IMR-90 (cell line): ENCODE measurements at regions of chr4 and their contacts with region 1.

Region 1: GRCh38 chr4:52051619-52052474 is 743 bp downstream of the SPATA18 start:
- DNase-seq: peak; percentile 89
- ATAC-seq: peak; percentile 96
- H3K4me3 ChIP-seq: peak overlapping the region; percentile 57
- H3K27ac ChIP-seq: peak overlapping the region; percentile 88
- H3K4me1 ChIP-seq: no peaks in the 10 kb centered on the region
- H3K27me3 ChIP-seq: peaks cover 6% of the 10 kb centered on the region
- CTCF ChIP-seq: no peak
- POLR2A ChIP-seq: no peak
- RAD21 ChIP-seq: no peak

Region 2: GRCh38 chr4:51997647-51998046 is 54.2 kb before region 1 on chr4:
- CTCF ChIA-PET with region 1: no interaction called
- POLR2A ChIA-PET with region 1: no interaction called
- dilution Hi-C with region 1: no loop called
- in situ Hi-C with region 1: no loop called
- intact Hi-C with region 1: loop called (anchors 10 kb)
- DNase-seq: no peak
- ATAC-seq: no peak
- H3K4me3 ChIP-seq: no peak overlapping the region
- H3K27ac ChIP-seq: no peak overlapping the region
- H3K4me1 ChIP-seq: peaks cover 2% of the 10 kb centered on the region
- H3K27me3 ChIP-seq: peaks cover 2% of the 10 kb centered on the region; the same call in 1 of the 2 replicates
- CTCF ChIP-seq: no peak
- POLR2A ChIP-seq: no peak
- RAD21 ChIP-seq: no peak

Region 3: DNA sequence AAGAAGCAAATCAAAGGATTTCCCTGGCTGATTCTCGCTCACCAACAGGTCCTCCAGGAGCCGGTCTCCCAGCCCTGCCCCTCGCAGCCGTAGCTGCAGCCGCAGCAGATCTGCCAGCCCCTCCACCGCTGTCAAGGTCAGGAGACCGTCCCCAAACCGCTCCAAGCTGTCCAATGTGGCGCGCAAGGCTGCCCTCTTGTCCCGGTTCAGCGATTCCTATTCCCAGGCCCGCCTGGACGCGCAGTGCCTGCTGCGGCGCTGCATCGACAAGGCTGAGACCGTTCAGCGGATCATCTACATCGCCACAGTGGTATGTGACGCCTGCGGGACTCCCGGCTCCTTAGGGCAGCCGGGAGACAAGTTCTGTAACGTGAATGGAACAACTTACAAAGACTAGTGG is 24.9 kb after region 1 on chr4:
- CTCF ChIA-PET with region 1: interaction called, 3 read pairs
- POLR2A ChIA-PET with region 1: no interaction called
- dilution Hi-C with region 1: no loop called
- in situ Hi-C with region 1: no loop called
- intact Hi-C with region 1: loop called (anchors 2 kb)
- DNase-seq: no peak
- ATAC-seq: peak; percentile 89
- H3K4me3 ChIP-seq: no peak overlapping the region
- H3K27ac ChIP-seq: no peak overlapping the region
- H3K4me1 ChIP-seq: no peaks in the 10 kb centered on the region
- H3K27me3 ChIP-seq: peaks cover 7% of the 10 kb centered on the region; the same call in 1 of the 2 replicates
- CTCF ChIP-seq: no peak
- POLR2A ChIP-seq: no peak
- RAD21 ChIP-seq: no peak

Region 4: GRCh38 chr4:52091535-52092200 is 39.8 kb after region 1 on chr4:
- CTCF ChIA-PET with region 1: no interaction called
- POLR2A ChIA-PET with region 1: no interaction called
- dilution Hi-C with region 1: no loop called
- in situ Hi-C with region 1: no loop called
- intact Hi-C with region 1: loop called (anchors 5 kb)
- DNase-seq: peak; percentile 62
- ATAC-seq: peak; percentile 97
- H3K4me3 ChIP-seq: no peak overlapping the region
- H3K27ac ChIP-seq: no peak overlapping the region
- H3K4me1 ChIP-seq: no peaks in the 10 kb centered on the region; the same call in 1 of the 2 replicates
- H3K27me3 ChIP-seq: no peaks in the 10 kb centered on the region
- CTCF ChIP-seq: no peak
- POLR2A ChIP-seq: no peak
- RAD21 ChIP-seq: no peak

Region 5: DNA sequence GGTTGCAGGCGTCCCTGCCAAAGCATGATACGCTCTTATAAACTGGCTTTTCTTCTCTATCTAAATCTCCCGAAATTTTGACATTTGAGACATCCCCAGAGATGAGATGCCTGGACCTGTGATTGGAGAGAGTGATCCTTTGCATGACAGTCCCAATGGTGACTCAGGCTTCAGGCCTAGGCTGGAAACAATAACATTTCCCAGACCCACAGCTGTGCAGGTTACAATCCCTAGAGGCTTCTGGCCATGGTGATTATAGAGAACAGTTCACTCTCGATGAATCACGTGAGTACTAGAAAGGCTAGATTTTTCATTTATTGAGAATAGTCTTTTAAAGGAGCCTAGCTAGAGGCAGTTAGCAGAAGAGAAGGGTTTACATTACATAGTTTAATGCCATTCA is 75.1 kb after region 1 on chr4:
- CTCF ChIA-PET with region 1: no interaction called
- POLR2A ChIA-PET with region 1: no interaction called
- dilution Hi-C with region 1: no loop called
- in situ Hi-C with region 1: no loop called
- intact Hi-C with region 1: loop called (anchors 5 kb)
- DNase-seq: peak; percentile 8
- ATAC-seq: peak; percentile 51; the same call in 1 of the 2 replicates
- H3K4me3 ChIP-seq: no peak overlapping the region
- H3K27ac ChIP-seq: no peak overlapping the region
- H3K4me1 ChIP-seq: no peaks in the 10 kb centered on the region
- H3K27me3 ChIP-seq: no peaks in the 10 kb centered on the region
- CTCF ChIP-seq: no peak
- POLR2A ChIP-seq: no peak
- RAD21 ChIP-seq: no peak